Naive thymus-derived CD4-positive, alpha-beta T cell (primary cell): ENCODE measurements at regions of chr13 and their contacts with region 1.

Region 1: GRCh38 chr13:48769107-48769704 is 115.5 kb downstream of the CYSLTR2 start:
- DNase-seq: peak; percentile 44 to 87 (median 82)
- ATAC-seq: peak; percentile 100
- H3K4me3 ChIP-seq: no peak overlapping the region
- H3K4me3 Mint-ChIP-seq: peak overlapping the region in 1 of 10 donors; percentile 4
- H3K27ac ChIP-seq: no peak overlapping the region
- H3K27ac Mint-ChIP-seq: peak overlapping the region in 1 of 9 donors; percentile 0
- H3K4me1 ChIP-seq: no peaks in the 10 kb centered on the region
- H3K4me1 Mint-ChIP-seq: peaks cover 0 to 16% (median 5%) of the 10 kb centered on the region in 7 donors
- H3K27me3 ChIP-seq: no peaks in the 10 kb centered on the region
- H3K27me3 Mint-ChIP-seq: peaks cover 4 to 46% (median 17%) of the 10 kb centered on the region in 5 donors

Region 2: DNA sequence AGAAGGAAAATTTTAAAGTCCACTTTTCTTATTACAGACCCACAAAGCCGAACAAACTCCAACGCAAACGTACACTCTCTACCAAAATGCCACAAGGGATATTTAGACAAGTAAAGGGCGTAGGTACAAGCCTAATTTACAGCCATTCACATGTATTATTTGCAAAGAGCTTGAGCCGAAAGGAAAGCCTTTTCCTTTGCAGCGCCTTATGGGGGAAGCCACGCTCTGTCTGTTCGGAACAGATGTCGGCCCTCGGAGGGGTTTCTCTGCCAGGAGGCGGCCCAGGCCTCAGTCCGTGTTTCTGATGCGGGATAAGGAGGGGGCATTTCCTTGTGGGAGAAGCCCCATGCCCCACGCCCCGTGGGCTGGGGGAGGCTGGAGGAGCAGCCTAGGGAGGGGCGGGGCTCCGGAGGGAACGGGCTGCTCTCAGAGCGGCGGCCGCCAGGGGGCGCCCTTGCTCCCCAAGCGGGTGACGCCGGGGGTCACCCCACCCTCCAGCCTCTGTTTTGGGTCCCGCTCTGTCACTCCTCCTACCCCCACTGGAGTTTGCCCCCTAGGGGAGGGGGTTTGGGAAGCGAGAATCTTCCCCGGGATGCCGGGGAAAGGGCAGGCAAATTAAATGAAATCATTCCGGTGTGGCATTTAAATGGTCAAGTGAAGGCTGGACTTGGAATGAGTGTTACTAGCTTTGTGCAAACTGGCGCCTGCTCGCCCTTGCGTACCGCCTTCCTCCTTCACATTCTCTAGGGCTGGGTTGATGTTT is 1875.2 kb before region 1 on chr13:
- CTCF ChIA-PET with region 1: no interaction called
- POLR2A ChIA-PET with region 1: no interaction called
- intact Hi-C with region 1: loop called in 1 of 2 experiments (anchors 10 kb)
- DNase-seq: peak; percentile 33 to 80 (median 66)
- ATAC-seq: peak; percentile 91
- H3K4me3 ChIP-seq: peak overlapping the region; percentile 53
- H3K4me3 Mint-ChIP-seq: peak overlapping the region; percentile 66 to 82 (median 78)
- H3K27ac ChIP-seq: no peak overlapping the region
- H3K27ac Mint-ChIP-seq: no peak overlapping the region
- H3K4me1 ChIP-seq: peaks cover 0 to 4% of the 10 kb centered on the region in 2 donors
- H3K4me1 Mint-ChIP-seq: peaks cover 0 to 38% (median 28%) of the 10 kb centered on the region in 7 donors
- H3K27me3 ChIP-seq: no peaks in the 10 kb centered on the region
- H3K27me3 Mint-ChIP-seq: peaks cover 44 to 84% (median 74%) of the 10 kb centered on the region in 5 donors

Region 3: GRCh38 chr13:48078251-48078656 is 691.0 kb before region 1 on chr13:
- CTCF ChIA-PET with region 1: no interaction called
- POLR2A ChIA-PET with region 1: no interaction called
- intact Hi-C with region 1: loop called (anchors 1 to 5 kb)
- DNase-seq: peak in 5 of 9 donors; percentile 3 to 34 (median 6)
- ATAC-seq: peak; percentile 73
- H3K4me3 ChIP-seq: no peak overlapping the region
- H3K4me3 Mint-ChIP-seq: no peak overlapping the region
- H3K27ac ChIP-seq: no peak overlapping the region
- H3K27ac Mint-ChIP-seq: peak overlapping the region in 3 of 9 donors; percentile 20 to 60 (median 28)
- H3K4me1 ChIP-seq: no peaks in the 10 kb centered on the region
- H3K4me1 Mint-ChIP-seq: peaks cover 0 to 11% (median 0%) of the 10 kb centered on the region in 7 donors
- H3K27me3 ChIP-seq: no peaks in the 10 kb centered on the region
- H3K27me3 Mint-ChIP-seq: no peaks in the 10 kb centered on the region

Region 4: GRCh38 chr13:48265217-48265815 is 503.9 kb before region 1 on chr13:
- CTCF ChIA-PET with region 1: no interaction called
- POLR2A ChIA-PET with region 1: no interaction called
- intact Hi-C with region 1: loop called in 1 of 2 experiments (anchors 5 kb)
- DNase-seq: peak in 3 of 9 donors; percentile 17 to 38 (median 27)
- ATAC-seq: peak; percentile 48
- H3K4me3 ChIP-seq: no peak overlapping the region
- H3K4me3 Mint-ChIP-seq: peak overlapping the region in 9 of 10 donors; percentile 15 to 72 (median 54)
- H3K27ac ChIP-seq: no peak overlapping the region
- H3K27ac Mint-ChIP-seq: peak overlapping the region; percentile 7 to 92 (median 86)
- H3K4me1 ChIP-seq: peaks cover 0 to 22% of the 10 kb centered on the region in 2 donors
- H3K4me1 Mint-ChIP-seq: peaks cover 22 to 73% (median 54%) of the 10 kb centered on the region in 7 donors
- H3K27me3 ChIP-seq: no peaks in the 10 kb centered on the region
- H3K27me3 Mint-ChIP-seq: no peaks in the 10 kb centered on the region

Region 5: GRCh38 chr13:48492470-48493065 is 276.6 kb before region 1 on chr13:
- CTCF ChIA-PET with region 1: no interaction called
- POLR2A ChIA-PET with region 1: no interaction called
- intact Hi-C with region 1: loop called in 1 of 2 experiments (anchors 5 kb)
- DNase-seq: peak; percentile 38 to 79 (median 74)
- ATAC-seq: peak; percentile 91
- H3K4me3 ChIP-seq: peak overlapping the region; percentile 73
- H3K4me3 Mint-ChIP-seq: no peak overlapping the region
- H3K27ac ChIP-seq: peak overlapping the region; percentile 74
- H3K27ac Mint-ChIP-seq: no peak overlapping the region
- H3K4me1 ChIP-seq: peaks cover 67% of the 10 kb centered on the region in 2 donors
- H3K4me1 Mint-ChIP-seq: peaks cover 1 to 55% (median 34%) of the 10 kb centered on the region in 7 donors
- H3K27me3 ChIP-seq: no peaks in the 10 kb centered on the region
- H3K27me3 Mint-ChIP-seq: no peaks in the 10 kb centered on the region

Region 6: DNA sequence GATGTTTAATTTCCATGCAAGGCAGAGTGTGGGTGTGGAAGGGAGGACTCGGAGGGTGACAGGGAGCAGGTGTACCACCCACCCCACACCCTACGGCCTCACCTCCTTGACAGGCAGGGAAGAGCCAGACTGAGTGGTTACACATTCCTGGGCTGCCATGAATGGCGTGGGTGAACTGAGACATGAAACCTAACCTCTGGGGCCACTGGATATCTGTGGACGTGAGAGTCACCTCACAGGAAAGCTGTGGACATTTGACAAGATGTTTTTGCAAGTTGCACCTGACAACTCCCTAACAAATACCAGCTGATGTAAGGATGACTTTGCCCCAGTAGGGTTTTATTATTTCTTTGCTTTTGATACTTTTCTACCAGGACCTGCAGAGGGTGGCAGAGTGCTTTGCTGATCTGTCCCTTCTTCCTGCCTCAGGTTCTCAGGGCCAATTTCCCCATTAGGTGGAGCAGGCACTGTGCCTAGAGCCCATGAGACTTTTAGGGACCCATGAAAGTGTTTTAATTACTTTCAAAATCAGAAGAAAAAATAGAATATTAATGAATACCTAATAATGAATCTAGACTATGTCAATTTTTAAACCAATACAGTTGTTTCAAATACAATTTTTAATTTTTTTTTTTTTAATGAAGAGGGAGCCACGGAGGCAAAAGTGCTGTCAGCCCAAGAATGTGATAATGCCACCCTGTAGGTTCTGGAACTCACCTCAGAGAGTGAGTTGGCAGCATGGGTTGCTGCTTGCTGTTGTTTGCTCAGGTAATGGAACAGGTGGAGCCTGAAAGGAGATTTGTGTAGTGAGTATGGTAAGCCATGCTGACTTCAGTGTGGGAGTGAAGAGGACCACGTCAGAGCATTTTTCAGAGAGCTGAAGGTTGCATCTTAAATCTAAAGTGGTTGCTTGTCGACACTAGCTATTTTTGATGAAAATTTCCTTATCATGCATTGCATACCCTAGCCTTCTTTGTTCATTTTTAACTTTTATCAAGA is 173.5 kb before region 1 on chr13:
- CTCF ChIA-PET with region 1: interaction called, 63 read pairs
- POLR2A ChIA-PET with region 1: no interaction called
- intact Hi-C with region 1: loop called (anchors 1 kb)
- DNase-seq: peak in 8 of 9 donors; percentile 24 to 79 (median 60)
- ATAC-seq: peak; percentile 96
- H3K4me3 ChIP-seq: no peak overlapping the region
- H3K4me3 Mint-ChIP-seq: no peak overlapping the region
- H3K27ac ChIP-seq: no peak overlapping the region
- H3K27ac Mint-ChIP-seq: peak overlapping the region in 1 of 9 donors; percentile 10
- H3K4me1 ChIP-seq: no peaks in the 10 kb centered on the region
- H3K4me1 Mint-ChIP-seq: peaks cover 0 to 3% (median 0%) of the 10 kb centered on the region in 7 donors
- H3K27me3 ChIP-seq: no peaks in the 10 kb centered on the region
- H3K27me3 Mint-ChIP-seq: peaks cover 0 to 19% (median 0%) of the 10 kb centered on the region in 5 donors

Region 7: DNA sequence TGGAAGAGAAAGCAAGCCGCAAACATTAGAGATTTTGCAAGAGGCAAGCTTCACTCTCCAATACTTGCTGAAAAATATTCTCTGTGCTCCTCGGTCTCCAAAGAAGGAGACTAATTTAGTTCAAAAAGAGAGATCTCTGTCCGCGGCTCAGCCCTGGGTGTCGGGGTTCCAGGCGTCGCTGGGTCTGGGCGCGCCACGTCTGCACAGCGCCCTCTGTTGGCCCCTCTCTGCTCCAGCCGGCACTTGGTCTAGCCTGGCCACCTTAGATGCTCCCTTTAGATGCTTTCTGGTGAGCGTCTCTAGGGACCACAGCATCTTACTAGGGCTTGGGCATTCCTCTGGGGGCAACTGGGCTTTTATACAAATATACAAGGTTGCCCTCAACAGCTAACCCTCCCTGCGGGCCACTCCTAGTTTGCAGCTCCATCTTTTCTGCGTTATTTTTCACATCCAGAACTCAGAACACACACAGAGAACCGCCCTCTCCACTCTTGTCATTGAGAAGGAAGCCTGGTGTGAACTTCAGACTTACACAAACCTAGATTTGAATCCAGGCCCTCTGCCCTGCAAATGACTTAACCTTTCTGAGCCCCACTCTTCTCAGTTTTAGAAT is 37.1 kb before region 1 on chr13:
- CTCF ChIA-PET with region 1: interaction called, 5 read pairs
- POLR2A ChIA-PET with region 1: no interaction called
- intact Hi-C with region 1: loop called (anchors 1 kb)
- DNase-seq: peak; percentile 25 to 59 (median 51)
- ATAC-seq: peak; percentile 88
- H3K4me3 ChIP-seq: peak overlapping the region; percentile 31
- H3K4me3 Mint-ChIP-seq: peak overlapping the region; percentile 56 to 85 (median 78)
- H3K27ac ChIP-seq: no peak overlapping the region
- H3K27ac Mint-ChIP-seq: peak overlapping the region in 1 of 9 donors; percentile 57
- H3K4me1 ChIP-seq: no peaks in the 10 kb centered on the region
- H3K4me1 Mint-ChIP-seq: peaks cover 0 to 12% (median 6%) of the 10 kb centered on the region in 7 donors
- H3K27me3 ChIP-seq: peaks cover 0 to 4% of the 10 kb centered on the region in 2 donors
- H3K27me3 Mint-ChIP-seq: peaks cover 0 to 5% (median 4%) of the 10 kb centered on the region in 5 donors

Region 8: GRCh38 chr13:48810013-48810412 is 40.8 kb after region 1 on chr13:
- CTCF ChIA-PET with region 1: no interaction called
- POLR2A ChIA-PET with region 1: no interaction called
- intact Hi-C with region 1: no loop called
- DNase-seq: no peak
- ATAC-seq: no peak
- H3K4me3 ChIP-seq: no peak overlapping the region
- H3K4me3 Mint-ChIP-seq: no peak overlapping the region
- H3K27ac ChIP-seq: no peak overlapping the region
- H3K27ac Mint-ChIP-seq: no peak overlapping the region
- H3K4me1 ChIP-seq: peaks cover 3 to 14% of the 10 kb centered on the region in 2 donors
- H3K4me1 Mint-ChIP-seq: peaks cover 13 to 27% (median 19%) of the 10 kb centered on the region in 7 donors
- H3K27me3 ChIP-seq: no peaks in the 10 kb centered on the region
- H3K27me3 Mint-ChIP-seq: peaks cover 0 to 8% (median 4%) of the 10 kb centered on the region in 5 donors